ENCODE measurements at regions of chr15 and their contacts with region 1.

Region 1: DNA sequence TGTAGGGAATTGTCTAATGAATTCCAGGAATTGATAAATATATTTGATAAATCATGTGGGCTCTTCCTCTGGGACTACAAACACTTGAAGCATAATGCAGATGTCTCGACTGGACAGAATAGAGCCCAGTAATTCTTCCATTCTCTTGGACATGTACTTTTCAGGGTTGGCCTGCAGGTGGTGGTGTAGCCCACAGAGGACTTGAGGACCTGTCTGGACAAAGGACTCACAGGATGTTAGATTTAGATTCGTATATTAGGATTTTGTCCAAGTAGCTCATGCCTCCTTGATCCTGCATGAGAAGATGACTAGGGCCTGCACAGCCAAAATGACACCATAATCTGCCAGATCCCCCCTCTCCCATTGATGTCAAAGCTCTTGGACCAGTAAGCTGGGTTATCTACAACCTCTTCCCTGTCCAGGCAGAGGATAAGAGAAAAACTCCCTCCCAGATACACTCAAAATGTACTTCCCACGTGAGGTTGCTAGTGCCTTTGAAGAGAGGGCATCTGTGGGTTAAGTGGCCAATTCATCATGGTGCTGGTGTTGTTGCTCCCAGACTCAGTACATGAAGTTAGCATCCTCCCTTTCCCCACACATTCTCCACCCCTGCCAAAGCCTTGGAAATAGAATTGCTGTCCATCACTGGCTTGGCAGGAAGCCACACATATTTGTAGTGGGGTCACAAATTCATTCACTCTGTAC is 88.6 kb upstream of the ZNF280D start:
- DNase-seq: peak; percentile 56
- H3K4me3 ChIP-seq: no peak overlapping the region
- H3K27ac ChIP-seq: no peak overlapping the region
- H3K4me1 ChIP-seq: peaks cover 19% of the 10 kb centered on the region
- H3K27me3 ChIP-seq: no peaks in the 10 kb centered on the region
- CTCF ChIP-seq: peak; percentile 62 to 88

Region 2: GRCh38 chr15:56496635-56497034 is 325.2 kb before region 1 on chr15:
- CTCF ChIA-PET with region 1: interaction called, 3 read pairs
- dilution Hi-C with region 1: no loop called
- in situ Hi-C with region 1: loop called in 1 of 2 experiments (anchors 25 kb)
- intact Hi-C with region 1: loop called (anchors 2 kb)
- DNase-seq: peak; percentile 48
- H3K4me3 ChIP-seq: no peak overlapping the region
- H3K27ac ChIP-seq: no peak overlapping the region
- H3K4me1 ChIP-seq: no peaks in the 10 kb centered on the region
- H3K27me3 ChIP-seq: no peaks in the 10 kb centered on the region
- CTCF ChIP-seq: peak; percentile 71 to 83

Region 3: GRCh38 chr15:56772868-56773639 is 48.8 kb before region 1 on chr15:
- CTCF ChIA-PET with region 1: no interaction called
- dilution Hi-C with region 1: no loop called
- in situ Hi-C with region 1: no loop called
- intact Hi-C with region 1: no loop called
- DNase-seq: no peak
- H3K4me3 ChIP-seq: no peak overlapping the region
- H3K27ac ChIP-seq: no peak overlapping the region
- H3K4me1 ChIP-seq: no peaks in the 10 kb centered on the region
- H3K27me3 ChIP-seq: no peaks in the 10 kb centered on the region
- CTCF ChIP-seq: no peak

Region 4: DNA sequence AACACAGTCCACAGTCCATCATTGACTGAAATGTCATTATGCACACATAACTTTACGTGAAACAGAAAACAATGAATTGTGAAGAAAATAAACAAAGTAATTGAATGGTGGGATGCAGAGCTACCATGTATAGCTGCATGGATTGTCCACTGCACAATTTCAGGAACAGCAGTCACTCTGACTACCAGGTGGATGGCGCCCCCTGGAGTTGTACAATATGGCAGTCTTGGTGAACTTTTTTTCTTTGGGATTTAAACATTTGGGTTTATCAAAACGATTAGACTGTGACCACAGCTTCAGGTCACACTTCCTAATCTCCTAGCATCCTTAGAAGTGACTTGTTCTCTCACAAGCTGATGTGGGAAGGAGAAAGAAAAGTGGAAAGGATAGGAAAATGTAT is 47.7 kb after region 1 on chr15:
- CTCF ChIA-PET with region 1: no interaction called
- dilution Hi-C with region 1: no loop called
- in situ Hi-C with region 1: no loop called
- intact Hi-C with region 1: loop called (anchors 1 kb)
- DNase-seq: no peak
- H3K4me3 ChIP-seq: no peak overlapping the region
- H3K27ac ChIP-seq: no peak overlapping the region
- H3K4me1 ChIP-seq: peaks cover 9% of the 10 kb centered on the region
- H3K27me3 ChIP-seq: no peaks in the 10 kb centered on the region
- CTCF ChIP-seq: peak; percentile 41 to 48

Region 5: GRCh38 chr15:56887782-56888438 is 66.0 kb after region 1 on chr15:
- CTCF ChIA-PET with region 1: no interaction called
- dilution Hi-C with region 1: no loop called
- in situ Hi-C with region 1: no loop called
- intact Hi-C with region 1: no loop called
- DNase-seq: no peak
- H3K4me3 ChIP-seq: peak overlapping the region; percentile 47 to 62 (median 49)
- H3K27ac ChIP-seq: peak overlapping the region; percentile 73
- H3K4me1 ChIP-seq: peaks cover 14% of the 10 kb centered on the region
- H3K27me3 ChIP-seq: no peaks in the 10 kb centered on the region
- CTCF ChIP-seq: no peak

Region 6: DNA sequence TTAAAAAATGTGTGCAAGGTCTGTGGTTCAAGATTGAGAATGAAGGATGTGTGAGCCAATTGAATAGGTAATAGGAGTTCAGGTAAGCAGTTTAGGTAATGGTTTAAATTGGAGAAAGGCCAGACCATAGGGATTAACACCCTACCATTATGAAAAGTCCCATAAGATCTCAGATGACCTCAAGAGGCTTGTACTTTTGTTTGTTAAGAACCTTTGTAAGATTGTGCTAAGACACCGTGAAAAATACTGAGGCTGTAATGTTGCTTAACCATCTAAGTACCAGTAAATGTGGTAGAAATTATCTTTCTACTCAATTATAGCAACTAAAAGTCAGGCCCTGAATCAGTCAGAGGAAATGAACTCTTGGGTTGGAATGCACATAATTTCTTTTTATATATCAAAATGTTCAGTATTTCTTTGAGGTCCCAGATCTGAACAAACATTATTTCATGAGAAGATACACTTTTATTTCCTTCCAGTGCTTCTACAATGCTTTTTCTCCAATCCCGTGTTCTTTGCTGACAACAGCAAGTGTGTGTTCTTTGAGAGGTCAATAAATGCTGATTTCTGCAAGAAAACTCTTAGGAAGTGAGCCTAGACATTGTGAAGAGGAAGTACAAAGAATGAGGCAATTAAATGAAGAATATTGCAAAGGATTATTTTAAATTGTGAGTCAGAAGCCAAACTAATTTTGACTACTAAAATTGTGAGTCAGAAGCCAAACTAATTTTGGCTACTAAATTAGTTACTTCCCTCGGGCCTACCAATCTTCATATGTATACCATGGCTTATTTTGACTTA is 163.0 kb after region 1 on chr15:
- CTCF ChIA-PET with region 1: no interaction called
- dilution Hi-C with region 1: no loop called
- in situ Hi-C with region 1: no loop called
- intact Hi-C with region 1: loop called (anchors 2 kb)
- DNase-seq: no peak
- H3K4me3 ChIP-seq: no peak overlapping the region
- H3K27ac ChIP-seq: no peak overlapping the region
- H3K4me1 ChIP-seq: peaks cover 22% of the 10 kb centered on the region
- H3K27me3 ChIP-seq: no peaks in the 10 kb centered on the region
- CTCF ChIP-seq: no peak

Region 7: DNA sequence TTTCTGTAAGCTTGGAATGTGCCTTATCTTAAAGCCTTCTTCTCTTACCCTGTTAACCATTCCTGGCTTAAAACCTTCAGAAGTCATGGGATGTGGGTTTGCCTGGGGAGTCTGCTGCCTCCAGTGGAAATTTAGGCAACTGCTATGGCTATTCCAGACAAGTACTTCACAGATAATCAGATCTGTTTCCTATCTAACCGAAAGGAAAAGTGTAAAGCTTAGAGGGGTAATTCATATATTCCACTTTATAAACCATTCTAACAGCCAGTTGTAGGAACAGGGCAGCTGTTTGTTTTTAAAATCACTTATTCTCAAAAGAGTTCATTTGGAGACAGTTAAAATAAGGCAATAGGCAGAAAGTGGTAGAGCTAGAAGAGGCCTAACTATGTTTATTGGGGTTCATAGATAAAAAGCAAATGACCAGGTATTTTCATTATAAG is 316.5 kb after region 1 on chr15:
- CTCF ChIA-PET with region 1: interaction called, 3 read pairs
- dilution Hi-C with region 1: no loop called
- in situ Hi-C with region 1: loop called in 1 of 2 experiments (anchors 25 kb)
- intact Hi-C with region 1: loop called (anchors 1 kb)
- DNase-seq: peak; percentile 41
- H3K4me3 ChIP-seq: no peak overlapping the region
- H3K27ac ChIP-seq: no peak overlapping the region
- H3K4me1 ChIP-seq: no peaks in the 10 kb centered on the region
- H3K27me3 ChIP-seq: no peaks in the 10 kb centered on the region
- CTCF ChIP-seq: peak; percentile 90 to 93

Region 8: DNA sequence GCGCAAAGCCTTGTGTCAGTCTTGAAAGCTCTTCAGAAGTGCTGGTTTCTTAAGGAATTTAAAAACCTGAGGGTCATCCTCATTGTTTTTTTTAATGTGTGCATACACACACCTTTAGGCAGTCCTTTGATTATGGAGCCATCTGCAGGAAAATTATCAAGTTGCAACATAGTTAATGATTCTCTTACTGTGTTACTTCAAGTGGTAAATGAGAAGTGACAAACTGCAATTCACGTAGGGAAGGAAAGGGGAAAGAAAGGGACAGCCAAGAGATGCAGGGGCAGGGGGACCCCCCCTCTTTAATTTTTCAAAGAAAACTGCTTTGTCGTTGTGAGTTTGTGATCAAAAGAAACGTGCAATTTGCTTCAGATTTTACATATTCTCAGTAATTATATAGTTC is 392.0 kb after region 1 on chr15:
- CTCF ChIA-PET with region 1: no interaction called
- dilution Hi-C with region 1: no loop called
- in situ Hi-C with region 1: no loop called
- intact Hi-C with region 1: loop called (anchors 1 kb)
- DNase-seq: peak; percentile 24
- H3K4me3 ChIP-seq: no peak overlapping the region
- H3K27ac ChIP-seq: no peak overlapping the region
- H3K4me1 ChIP-seq: peaks cover 21% of the 10 kb centered on the region
- H3K27me3 ChIP-seq: no peaks in the 10 kb centered on the region
- CTCF ChIP-seq: peak; percentile 34 to 59